PC-9 (cell line): ENCODE measurements at regions of chr10 and their contacts with region 1.

Region 1: DNA sequence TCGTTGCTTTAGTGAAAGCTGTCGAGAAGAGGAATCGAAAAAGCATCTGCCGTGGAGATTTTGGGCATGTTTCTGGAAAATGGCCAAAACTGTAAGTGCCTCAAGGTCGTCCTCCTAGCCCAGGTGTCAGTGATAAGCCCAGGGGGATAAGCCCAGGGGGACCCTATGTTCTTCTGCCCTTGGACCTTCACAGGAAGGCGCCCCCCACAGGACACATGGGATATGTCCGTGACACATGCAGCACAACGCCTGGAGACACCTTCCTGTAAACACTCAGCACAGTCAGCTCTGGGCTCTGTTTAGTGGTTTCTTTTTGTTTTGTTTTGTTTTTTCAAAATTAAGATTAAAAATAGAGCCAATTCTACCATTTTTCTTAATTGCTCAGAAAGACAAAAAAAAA is 272.7 kb downstream of the KLF6 start:
- DNase-seq: no peak
- H3K4me3 ChIP-seq: no peak overlapping the region
- H3K27ac ChIP-seq: no peak overlapping the region
- H3K4me1 ChIP-seq: no peaks in the 10 kb centered on the region
- H3K27me3 ChIP-seq: no peaks in the 10 kb centered on the region
- CTCF ChIP-seq: no peak

Region 2: GRCh38 chr10:1847361-1847760 is 1664.9 kb before region 1 on chr10:
- CTCF ChIA-PET with region 1: no interaction called
- POLR2A ChIA-PET with region 1: no interaction called
- intact Hi-C with region 1: no loop called
- DNase-seq: no peak
- H3K4me3 ChIP-seq: no peak overlapping the region
- H3K27ac ChIP-seq: no peak overlapping the region
- H3K4me1 ChIP-seq: no peaks in the 10 kb centered on the region
- H3K27me3 ChIP-seq: peaks cover 21% of the 10 kb centered on the region; the same call in 1 of the 2 replicates
- CTCF ChIP-seq: no peak

Region 3: GRCh38 chr10:3538658-3539531 is 26.6 kb after region 1 on chr10:
- CTCF ChIA-PET with region 1: no interaction called
- POLR2A ChIA-PET with region 1: interaction called, 19 read pairs
- intact Hi-C with region 1: no loop called
- DNase-seq: peak; percentile 43 to 60
- H3K4me3 ChIP-seq: no peak overlapping the region
- H3K27ac ChIP-seq: no peak overlapping the region
- H3K4me1 ChIP-seq: peaks cover 17% of the 10 kb centered on the region
- H3K27me3 ChIP-seq: no peaks in the 10 kb centered on the region
- CTCF ChIP-seq: no peak

Region 4: DNA sequence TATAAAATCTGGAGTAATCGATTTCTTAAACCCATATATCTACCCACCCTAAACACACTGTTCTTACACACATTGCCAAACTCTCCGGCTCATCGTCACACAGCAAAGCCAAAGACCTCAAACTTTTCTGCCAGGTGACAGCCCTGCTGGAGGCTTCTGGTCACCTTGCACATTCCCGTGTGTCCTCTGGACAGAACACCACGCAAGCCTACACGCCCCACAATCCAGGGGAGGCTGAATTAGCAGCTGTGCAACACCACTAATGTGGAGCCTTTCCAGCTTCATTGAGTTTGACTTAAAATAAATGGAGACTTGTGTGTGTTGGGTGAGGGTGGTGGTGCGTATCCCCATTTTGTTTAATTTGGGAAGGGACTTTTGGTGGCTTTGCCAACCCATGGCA is 234.4 kb after region 1 on chr10:
- CTCF ChIA-PET with region 1: interaction called, 11 read pairs
- POLR2A ChIA-PET with region 1: no interaction called
- intact Hi-C with region 1: no loop called
- DNase-seq: no peak
- H3K4me3 ChIP-seq: no peak overlapping the region
- H3K27ac ChIP-seq: no peak overlapping the region
- H3K4me1 ChIP-seq: peaks cover 13% of the 10 kb centered on the region
- H3K27me3 ChIP-seq: no peaks in the 10 kb centered on the region
- CTCF ChIP-seq: no peak